Activated CD4-positive, alpha-beta T cell treated with anti-CD3 and anti-CD28 coated beads, Interleukin-2, amount 10 ng/mL, durations not matched to agents 24 days and 14 days (primary cell): ENCODE measurements at regions of chr12 and their contacts with region 1.

Region 1: GRCh38 chr12:31749024-31749704 is 20.3 kb upstream of the AMN1 start:
- DNase-seq: peak; percentile 89
- H3K4me3 Mint-ChIP-seq: peak overlapping the region; percentile 1
- H3K27ac Mint-ChIP-seq: peak overlapping the region; percentile 38
- H3K4me1 Mint-ChIP-seq: peaks cover 43% of the 10 kb centered on the region
- H3K27me3 Mint-ChIP-seq: no peaks in the 10 kb centered on the region

Region 2: DNA sequence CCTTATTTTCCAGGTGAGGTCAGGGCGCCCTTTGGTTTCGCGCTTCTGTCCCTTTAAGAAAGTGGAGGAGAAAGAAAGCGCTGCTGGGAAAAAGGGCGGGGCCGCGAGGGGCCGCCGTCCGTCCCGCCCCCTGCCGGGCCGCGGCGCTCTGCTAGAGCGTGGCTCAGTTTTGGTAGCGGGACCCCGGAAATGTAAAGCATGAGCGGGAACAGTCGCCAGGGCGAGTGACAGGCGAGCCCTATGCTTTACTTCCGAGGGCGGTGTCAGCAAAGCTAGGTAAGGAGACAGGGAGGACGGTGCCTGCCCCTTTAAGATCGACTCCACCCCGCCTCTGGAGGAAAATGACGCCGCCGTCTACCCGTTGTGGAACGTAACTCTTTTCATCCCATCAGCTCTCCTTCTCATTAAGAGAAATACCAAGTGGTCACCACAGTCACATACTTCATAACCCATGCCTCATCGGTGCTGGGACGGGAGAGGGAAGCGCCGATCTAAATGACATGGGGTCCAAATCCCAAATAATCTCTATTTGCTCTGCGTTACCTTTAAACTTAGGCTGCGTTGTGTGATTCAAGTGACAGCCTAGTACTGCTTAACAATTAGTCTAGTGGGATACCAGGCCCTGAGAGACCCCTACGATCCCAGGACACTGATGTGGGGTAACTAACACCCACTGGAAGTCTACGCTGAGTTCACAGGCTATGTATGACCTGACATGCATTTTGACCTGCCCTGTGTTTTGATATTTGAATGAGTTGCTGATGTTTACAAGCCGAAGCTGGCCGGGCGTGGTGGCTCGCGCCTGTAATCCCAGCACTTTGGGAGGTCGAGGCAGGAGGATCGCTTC is 89.9 kb before region 1 on chr12 and contains the start of gene ETFBKMT:
- intact Hi-C with region 1: loop called (anchors 1 kb)
- DNase-seq: peak; percentile 98
- H3K4me3 Mint-ChIP-seq: peak within 1 kb of the TSS; percentile 93
- H3K27ac Mint-ChIP-seq: peak within 1 kb of the TSS; percentile 99
- H3K4me1 Mint-ChIP-seq: peaks cover 15% of the 10 kb centered on the region
- H3K27me3 Mint-ChIP-seq: no peaks in the 10 kb centered on the region
- total RNA-seq, gene ETFBKMT: 0.52 and 0.84 TPM in 2 replicates

Region 3: DNA sequence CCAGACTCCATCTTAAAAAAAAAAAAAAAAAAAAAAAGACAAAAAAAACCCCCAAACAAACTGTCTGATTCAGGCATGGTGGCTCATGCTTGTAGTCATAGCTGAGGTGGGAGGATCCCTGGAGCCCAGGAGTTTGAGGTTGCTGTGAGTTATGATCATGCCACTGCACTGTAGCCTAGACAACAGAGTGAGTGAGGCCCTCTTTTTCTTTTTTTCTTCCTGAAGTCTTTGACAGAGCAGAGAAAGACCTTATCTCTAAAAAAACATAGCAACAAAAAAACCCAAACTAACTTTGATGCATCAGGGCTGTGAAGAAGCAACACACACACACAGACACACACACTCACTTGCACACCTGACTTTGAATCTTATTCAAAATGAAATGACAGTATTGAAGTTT is 12.7 kb before region 1 on chr12:
- intact Hi-C with region 1: loop called (anchors 1 kb)
- DNase-seq: peak; percentile 87
- H3K4me3 Mint-ChIP-seq: peak overlapping the region; percentile 14
- H3K27ac Mint-ChIP-seq: peak overlapping the region; percentile 87
- H3K4me1 Mint-ChIP-seq: peaks cover 46% of the 10 kb centered on the region
- H3K27me3 Mint-ChIP-seq: no peaks in the 10 kb centered on the region

Region 4: DNA sequence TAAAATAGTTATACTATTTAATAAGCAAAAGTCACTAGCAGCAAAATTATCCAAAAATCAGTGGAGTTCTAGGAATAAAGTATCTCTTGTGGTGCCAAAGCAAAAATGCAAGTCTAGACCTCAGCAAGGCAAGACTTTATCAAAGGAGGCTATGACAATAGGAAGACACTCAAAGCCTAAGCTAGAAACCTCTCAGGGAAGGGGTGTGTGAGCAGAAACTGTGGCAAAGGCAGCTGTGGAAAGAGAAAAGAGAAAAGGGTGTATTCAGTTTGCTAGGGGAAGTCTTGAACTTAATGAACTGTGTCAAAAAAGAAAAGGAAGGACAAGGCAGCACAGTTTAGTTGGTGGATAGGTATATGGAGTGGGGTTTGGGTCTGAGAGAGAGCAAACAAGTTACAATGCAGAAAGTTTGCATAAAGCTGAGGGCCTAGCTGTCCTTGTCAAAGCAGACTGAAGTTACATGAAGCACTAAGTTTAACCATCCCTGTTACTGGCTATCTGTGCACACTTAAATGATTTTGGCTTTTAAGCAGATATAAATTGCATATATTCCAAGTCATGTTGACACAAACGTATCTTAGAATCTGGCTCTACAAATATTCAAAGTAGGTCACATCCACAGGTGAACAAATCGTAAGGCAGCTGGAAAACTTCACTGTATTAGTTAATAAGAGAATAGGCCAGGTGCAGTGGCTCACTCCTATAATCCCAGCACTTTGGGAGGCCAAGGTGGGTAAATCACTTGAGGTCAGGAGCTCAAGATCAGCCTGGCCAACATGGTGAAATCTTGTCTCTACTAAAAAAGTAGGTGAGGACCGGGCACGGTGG is 10.7 kb after region 1 on chr12:
- intact Hi-C with region 1: loop called (anchors 1 kb)
- DNase-seq: no peak
- H3K4me3 Mint-ChIP-seq: no peak overlapping the region
- H3K27ac Mint-ChIP-seq: peak overlapping the region; percentile 1
- H3K4me1 Mint-ChIP-seq: peaks cover 13% of the 10 kb centered on the region
- H3K27me3 Mint-ChIP-seq: no peaks in the 10 kb centered on the region

Region 5: GRCh38 chr12:31783996-31784645 is 35.0 kb after region 1 on chr12:
- intact Hi-C with region 1: no loop called
- DNase-seq: no peak
- H3K4me3 Mint-ChIP-seq: no peak overlapping the region
- H3K27ac Mint-ChIP-seq: no peak overlapping the region
- H3K4me1 Mint-ChIP-seq: no peaks in the 10 kb centered on the region
- H3K27me3 Mint-ChIP-seq: no peaks in the 10 kb centered on the region

Region 6: DNA sequence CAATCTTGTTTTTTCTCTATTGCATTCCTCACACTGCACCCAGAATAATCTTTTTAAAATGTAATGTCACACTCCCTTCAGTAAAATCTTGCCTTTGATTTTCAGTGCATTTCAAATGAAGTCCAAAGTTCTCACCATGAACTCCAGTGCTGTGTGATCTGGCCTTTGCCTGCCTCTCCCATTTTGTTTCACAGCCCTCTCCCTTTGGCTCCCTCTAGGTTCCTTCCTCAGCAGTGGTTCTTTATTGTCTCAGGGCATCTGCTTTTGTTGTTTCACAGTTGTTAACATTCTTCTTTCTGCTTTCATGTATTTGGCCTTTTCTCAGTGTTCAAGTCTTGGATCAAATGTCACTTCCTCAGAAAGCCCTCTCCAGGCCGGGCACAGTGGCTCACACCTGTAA is 64.1 kb after region 1 on chr12:
- intact Hi-C with region 1: loop called (anchors 2 kb)
- DNase-seq: no peak
- H3K4me3 Mint-ChIP-seq: no peak overlapping the region
- H3K27ac Mint-ChIP-seq: no peak overlapping the region
- H3K4me1 Mint-ChIP-seq: peaks cover 12% of the 10 kb centered on the region
- H3K27me3 Mint-ChIP-seq: no peaks in the 10 kb centered on the region

Region 7: DNA sequence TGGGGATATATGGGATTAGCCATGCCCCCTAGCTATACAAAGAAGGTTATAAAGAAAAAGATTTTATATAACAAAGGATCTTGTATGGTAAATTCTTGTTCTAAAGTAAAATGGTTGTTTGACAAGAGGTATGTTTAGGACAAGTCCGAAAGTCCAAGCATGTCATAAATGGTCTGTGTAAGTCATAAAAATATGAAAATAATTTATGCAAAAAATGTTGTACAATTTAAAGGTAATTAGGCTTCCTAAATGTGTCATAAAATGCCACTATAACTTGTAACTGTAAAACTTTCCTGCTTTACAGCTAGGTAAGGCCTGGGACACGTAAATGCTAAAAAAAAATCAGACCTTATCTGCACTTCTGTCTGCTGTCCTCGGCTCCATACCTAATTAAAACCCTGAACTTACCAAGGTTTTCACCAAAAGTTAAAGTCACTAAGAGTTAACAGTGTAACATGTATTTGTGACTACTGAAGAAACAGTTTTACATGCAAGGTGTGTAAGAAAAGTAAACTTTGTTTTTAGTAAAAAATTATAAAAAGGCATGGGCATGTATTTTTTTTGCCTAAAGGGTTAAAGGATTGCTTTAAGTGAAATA is 100.0 kb after region 1 on chr12:
- intact Hi-C with region 1: no loop called
- DNase-seq: no peak
- H3K4me3 Mint-ChIP-seq: no peak overlapping the region
- H3K27ac Mint-ChIP-seq: no peak overlapping the region
- H3K4me1 Mint-ChIP-seq: no peaks in the 10 kb centered on the region
- H3K27me3 Mint-ChIP-seq: no peaks in the 10 kb centered on the region

Region 8: GRCh38 chr12:31874961-31875608 is 125.9 kb after region 1 on chr12:
- intact Hi-C with region 1: loop called (anchors 1 kb)
- DNase-seq: peak; percentile 89
- H3K4me3 Mint-ChIP-seq: peak overlapping the region; percentile 68
- H3K27ac Mint-ChIP-seq: peak overlapping the region; percentile 99
- H3K4me1 Mint-ChIP-seq: peaks cover 20% of the 10 kb centered on the region
- H3K27me3 Mint-ChIP-seq: no peaks in the 10 kb centered on the region

Region 9: DNA sequence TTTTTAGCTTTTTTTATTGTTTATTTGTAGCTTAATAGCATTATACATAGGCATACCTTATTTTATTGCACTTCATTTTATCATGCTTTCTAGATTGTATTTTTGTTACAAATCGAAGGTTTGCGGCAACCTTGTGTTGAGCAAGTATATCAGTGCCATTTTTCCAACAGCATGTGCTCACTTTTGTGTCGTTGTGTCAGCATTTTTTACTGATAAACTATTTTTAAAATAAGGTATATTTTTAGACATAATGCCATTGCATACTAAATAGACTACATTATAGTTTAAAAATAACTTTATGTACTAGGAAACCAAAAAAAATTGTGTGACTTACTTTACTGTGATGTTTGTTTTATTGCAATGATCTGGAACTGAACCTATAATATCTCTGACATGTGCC is 153.9 kb after region 1 on chr12:
- intact Hi-C with region 1: no loop called
- DNase-seq: no peak
- H3K4me3 Mint-ChIP-seq: no peak overlapping the region
- H3K27ac Mint-ChIP-seq: no peak overlapping the region
- H3K4me1 Mint-ChIP-seq: peaks cover 14% of the 10 kb centered on the region
- H3K27me3 Mint-ChIP-seq: no peaks in the 10 kb centered on the region

Region 10: GRCh38 chr12:32139064-32139421 is 389.9 kb after region 1 on chr12:
- intact Hi-C with region 1: loop called (anchors 5 kb)
- DNase-seq: peak; percentile 79
- H3K4me3 Mint-ChIP-seq: peak overlapping the region; percentile 70
- H3K27ac Mint-ChIP-seq: peak overlapping the region; percentile 1
- H3K4me1 Mint-ChIP-seq: peaks cover 18% of the 10 kb centered on the region
- H3K27me3 Mint-ChIP-seq: peaks cover 14% of the 10 kb centered on the region